ENCODE measurements at regions of chr4 and their contacts with region 1.

Region 1: DNA sequence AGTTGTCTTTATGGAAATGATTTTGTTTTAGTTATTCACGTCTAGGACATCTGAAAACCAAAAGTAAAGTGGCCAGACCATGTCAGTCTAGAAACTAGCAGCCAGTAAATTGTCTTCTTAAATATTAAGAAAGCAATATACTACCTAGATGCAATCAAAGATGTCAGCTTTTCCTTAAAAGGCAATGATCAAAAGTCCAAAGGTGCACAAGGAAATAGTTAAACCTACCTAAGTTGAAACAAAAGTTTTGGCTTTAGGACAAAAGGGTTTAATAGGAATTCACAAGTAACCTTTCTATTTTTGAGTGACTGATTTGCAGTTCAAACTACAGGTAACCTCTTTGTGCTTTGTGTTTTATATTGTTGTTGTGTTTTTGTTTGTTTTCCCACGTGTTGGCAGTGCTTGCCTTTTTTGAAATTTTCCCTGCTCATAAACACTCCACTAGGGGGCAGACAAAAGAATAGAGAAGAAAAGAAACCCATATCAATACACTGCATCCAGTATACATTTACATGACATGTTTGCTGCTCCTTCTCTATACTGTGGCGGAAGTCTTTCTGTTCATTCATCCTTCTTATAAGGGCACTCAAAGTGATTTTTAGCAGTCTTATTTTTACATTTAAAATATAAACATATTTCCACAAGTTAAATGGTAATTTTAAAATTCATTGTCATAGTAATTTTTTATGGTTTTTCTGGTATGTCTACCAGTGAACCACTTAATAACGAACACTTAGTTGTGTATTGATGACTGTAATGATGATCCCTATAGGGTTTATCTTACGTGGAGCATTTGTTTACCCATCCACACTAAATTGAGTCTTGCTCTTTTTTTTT is 62.7 kb downstream of the GAB1 start:
- DNase-seq: peak; percentile 49
- H3K4me3 Mint-ChIP-seq: no peak overlapping the region
- H3K27ac Mint-ChIP-seq: no peak overlapping the region
- H3K4me1 Mint-ChIP-seq: peaks cover 10% of the 10 kb centered on the region
- H3K27me3 Mint-ChIP-seq: no peaks in the 10 kb centered on the region
- CTCF ChIP-seq: peak; percentile 56

Region 2: DNA sequence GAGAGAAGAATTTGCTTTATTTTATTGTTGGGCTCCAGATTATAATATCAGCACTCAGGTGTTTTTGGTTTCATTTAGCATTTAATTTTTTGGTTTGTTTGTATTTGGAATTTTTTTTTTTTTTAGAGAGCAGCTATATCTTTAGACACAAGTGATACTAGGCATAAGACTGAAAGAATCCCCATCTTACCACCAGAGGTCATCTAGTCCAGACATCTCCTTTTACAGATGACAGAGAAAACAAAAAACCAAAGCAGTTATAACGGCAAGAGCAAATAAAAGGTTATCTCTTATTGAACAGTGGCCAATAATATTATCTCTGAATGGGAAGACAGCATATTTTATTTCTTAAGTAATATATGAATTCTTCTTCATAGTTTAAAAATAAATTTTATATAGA is 191.8 kb before region 1 on chr4:
- CTCF ChIA-PET with region 1: interaction called, 4 read pairs
- POLR2A ChIA-PET with region 1: interaction called, 3 read pairs
- intact Hi-C with region 1: loop called (anchors 5 kb)
- DNase-seq: peak; percentile 40
- H3K4me3 Mint-ChIP-seq: no peak overlapping the region
- H3K27ac Mint-ChIP-seq: no peak overlapping the region
- H3K4me1 Mint-ChIP-seq: no peaks in the 10 kb centered on the region
- H3K27me3 Mint-ChIP-seq: no peaks in the 10 kb centered on the region
- CTCF ChIP-seq: peak; percentile 23

Measured in MCF 10A (cell line).